Endothelial cell of umbilical vein (primary cell): ENCODE measurements at regions of chr7 and their contacts with region 1.

Region 1: DNA sequence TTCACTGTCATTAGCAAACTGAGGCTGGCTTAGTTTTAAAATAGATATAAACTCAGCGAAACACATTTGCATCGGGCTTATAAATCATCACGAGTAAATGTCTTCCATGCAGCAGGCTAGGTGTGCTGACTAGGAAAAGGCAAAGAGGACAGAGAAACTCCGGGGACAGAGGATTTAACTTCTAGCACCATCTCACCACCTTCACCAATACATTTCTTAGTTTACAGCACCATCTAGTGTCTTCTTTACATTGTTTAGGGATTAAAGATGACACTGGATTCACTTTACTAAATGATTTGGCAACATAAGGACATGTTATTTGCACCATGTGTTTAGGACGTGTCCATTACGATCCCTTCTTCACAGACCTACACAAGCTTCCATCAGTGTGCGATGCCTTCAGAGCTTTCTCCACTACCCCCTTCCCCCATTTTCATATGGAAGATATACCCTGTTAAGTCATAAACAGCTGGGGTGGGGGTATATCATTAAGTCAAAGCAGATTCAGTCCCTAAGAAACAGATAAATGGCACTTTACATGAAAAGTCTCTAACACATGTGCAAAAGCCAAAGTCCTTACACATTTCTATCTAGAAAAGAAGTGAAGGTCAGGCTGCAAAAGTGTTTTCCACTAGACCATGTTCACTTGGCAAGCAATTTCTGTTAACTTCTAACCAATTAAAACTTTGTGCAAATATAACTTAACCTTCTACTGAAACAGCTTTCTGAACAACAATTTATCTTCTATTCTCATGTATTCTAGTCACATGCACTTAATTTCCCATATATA is 103.3 kb downstream of the GRB10 start:
- DNase-seq: peak; percentile 41
- H3K4me3 ChIP-seq: no peak overlapping the region
- H3K27ac ChIP-seq: no peak overlapping the region
- H3K4me1 ChIP-seq: peaks cover 15% of the 10 kb centered on the region
- H3K27me3 ChIP-seq: no peaks in the 10 kb centered on the region
- CTCF ChIP-seq: peak in 1 of 2 donors; percentile 5
- POLR2A ChIP-seq: no peak

Region 2: DNA sequence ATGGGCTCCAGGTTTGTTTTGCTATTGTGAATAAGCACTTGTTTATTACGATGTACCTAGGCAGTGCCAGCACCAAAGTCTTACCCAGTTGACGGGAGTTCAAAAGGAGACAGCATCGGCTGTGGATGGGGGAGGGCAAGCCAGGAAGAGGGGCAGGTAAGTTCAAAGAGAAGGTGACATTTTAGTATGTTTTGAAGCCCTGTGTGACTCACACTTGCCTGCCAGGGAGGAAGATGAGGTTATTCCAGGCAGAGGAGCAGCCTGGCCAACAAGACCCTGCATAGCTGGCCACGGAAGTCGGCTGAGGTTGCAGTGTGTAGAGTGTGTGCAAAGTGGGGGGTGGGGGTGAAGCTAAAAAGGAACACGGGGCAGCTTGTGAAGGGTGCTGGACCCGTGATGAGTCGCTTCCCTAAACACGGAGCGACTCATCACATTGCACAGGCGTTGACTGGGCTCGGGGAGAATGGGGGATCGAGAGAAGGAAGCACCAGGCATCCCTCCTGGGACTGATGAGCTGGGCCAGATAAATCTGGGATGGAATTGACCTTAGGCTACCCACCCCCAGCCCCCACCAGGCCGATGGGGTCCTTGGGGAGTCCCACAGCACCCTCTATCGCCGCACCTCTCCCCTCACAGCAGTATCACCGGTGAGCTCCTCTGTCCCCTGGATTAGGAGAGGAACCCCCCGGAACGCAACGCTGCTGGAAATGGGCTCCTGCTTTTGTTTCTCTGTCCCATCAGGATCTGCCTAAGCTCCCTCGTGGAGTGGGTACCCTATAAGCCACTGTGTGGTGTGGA is 472.8 kb before region 1 on chr7:
- CTCF ChIA-PET with region 1: interaction called, 7 read pairs
- POLR2A ChIA-PET with region 1: no interaction called
- dilution Hi-C with region 1: no loop called
- intact Hi-C with region 1: loop called (anchors 10 kb)
- DNase-seq: no peak
- H3K4me3 ChIP-seq: no peak overlapping the region
- H3K27ac ChIP-seq: no peak overlapping the region
- H3K4me1 ChIP-seq: no peaks in the 10 kb centered on the region
- H3K27me3 ChIP-seq: no peaks in the 10 kb centered on the region
- CTCF ChIP-seq: no peak
- POLR2A ChIP-seq: no peak